Esophagus squamous epithelium (tissue), 5 donors: ENCODE measurements at regions of chr7 and their contacts with region 1.

Region 1: GRCh38 chr7:116173051-116174028 is 37.0 kb upstream of the TES start:
- DNase-seq: no peak
- H3K4me3 ChIP-seq: no peak overlapping the region
- H3K27ac ChIP-seq: no peak overlapping the region
- H3K4me1 ChIP-seq: no peaks in the 10 kb centered on the region
- H3K27me3 ChIP-seq: no peaks in the 10 kb centered on the region
- CTCF ChIP-seq: peak; percentile 27 to 72 (median 60)
- POLR2A ChIP-seq: no peak

Region 2: GRCh38 chr7:116236020-116236630 is 62.8 kb after region 1 on chr7:
- intact Hi-C with region 1: loop called (anchors 5 kb)
- DNase-seq: no peak
- H3K4me3 ChIP-seq: no peak overlapping the region
- H3K27ac ChIP-seq: no peak overlapping the region
- H3K4me1 ChIP-seq: peaks cover 16 to 30% (median 20%) of the 10 kb centered on the region in 3 donors
- H3K27me3 ChIP-seq: no peaks in the 10 kb centered on the region
- CTCF ChIP-seq: peak; percentile 27 to 68 (median 54)
- POLR2A ChIP-seq: no peak

Region 3: GRCh38 chr7:116809636-116810266 is 636.4 kb after region 1 on chr7:
- intact Hi-C with region 1: loop called (anchors 10 kb)
- DNase-seq: no peak
- H3K4me3 ChIP-seq: no peak overlapping the region
- H3K27ac ChIP-seq: no peak overlapping the region
- H3K4me1 ChIP-seq: peaks cover 0 to 12% (median 0%) of the 10 kb centered on the region in 3 donors
- H3K27me3 ChIP-seq: no peaks in the 10 kb centered on the region
- CTCF ChIP-seq: peak in 5 of 6 experiments; percentile 52 to 77 (median 66)
- POLR2A ChIP-seq: no peak